ENCODE measurements at regions of chr19 and their contacts with region 1.

Region 1: GRCh38 chr19:48333467-48334384 is 8.4 kb downstream of the EMP3 start:
- DNase-seq: peak; percentile 89 to 97 (median 95)
- ATAC-seq: peak; percentile 56
- H3K4me3 ChIP-seq: peak overlapping the region; percentile 97
- H3K4me3 Mint-ChIP-seq: peak overlapping the region; percentile 89
- H3K27ac ChIP-seq: peak overlapping the region; percentile 97
- H3K27ac Mint-ChIP-seq: peak overlapping the region; percentile 99
- H3K4me1 ChIP-seq: peaks cover 58% of the 10 kb centered on the region
- H3K4me1 Mint-ChIP-seq: peaks cover 47% of the 10 kb centered on the region
- H3K27me3 ChIP-seq: no peaks in the 10 kb centered on the region
- H3K27me3 Mint-ChIP-seq: no peaks in the 10 kb centered on the region
- CTCF ChIP-seq: peak; percentile 84

Region 2: GRCh38 chr19:48203732-48204628 is 129.7 kb before region 1 on chr19:
- CTCF ChIA-PET with region 1: interaction called, 4 read pairs
- POLR2A ChIA-PET with region 1: interaction called, 10 read pairs
- intact Hi-C with region 1: no loop called
- DNase-seq: peak; percentile 84 to 95 (median 88)
- ATAC-seq: peak; percentile 100
- H3K4me3 ChIP-seq: peak overlapping the region; percentile 78
- H3K4me3 Mint-ChIP-seq: no peak overlapping the region
- H3K27ac ChIP-seq: peak overlapping the region; percentile 49 to 64
- H3K27ac Mint-ChIP-seq: no peak overlapping the region
- H3K4me1 ChIP-seq: peaks cover 33% of the 10 kb centered on the region
- H3K4me1 Mint-ChIP-seq: peaks cover 22% of the 10 kb centered on the region
- H3K27me3 ChIP-seq: no peaks in the 10 kb centered on the region
- H3K27me3 Mint-ChIP-seq: no peaks in the 10 kb centered on the region
- CTCF ChIP-seq: no peak

Region 3: DNA sequence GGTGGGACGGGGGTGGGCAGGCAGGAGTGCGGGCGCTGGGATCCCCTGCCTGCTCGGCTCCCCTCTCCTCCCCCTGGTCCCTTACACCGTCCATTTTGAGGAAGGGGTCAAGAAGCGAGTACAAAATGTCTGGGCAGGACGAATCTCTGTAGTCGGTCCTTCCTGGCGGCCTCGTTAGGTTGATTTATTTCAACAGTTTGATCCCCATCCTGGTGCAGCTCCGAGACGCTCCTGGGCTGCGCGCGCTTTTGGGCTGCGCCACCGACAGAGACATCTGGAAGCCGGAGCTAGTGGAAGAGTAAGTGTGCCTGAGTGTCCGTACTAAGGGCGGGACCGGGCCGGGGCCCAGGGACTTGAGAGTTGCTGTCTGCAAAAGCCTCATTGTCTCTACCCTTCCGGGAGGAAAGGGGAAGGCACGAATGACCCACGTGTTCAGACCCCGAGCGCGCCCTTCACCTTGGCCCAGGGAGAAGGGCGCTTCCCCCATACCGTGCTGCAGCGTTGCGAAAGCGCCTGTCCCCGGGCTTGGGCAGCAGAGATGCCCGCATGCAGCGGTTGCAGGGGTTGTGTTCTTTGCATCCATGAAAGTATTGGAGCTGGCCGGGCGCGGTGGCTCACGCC is 62.1 kb before region 1 on chr19:
- CTCF ChIA-PET with region 1: interaction called, 6 read pairs
- POLR2A ChIA-PET with region 1: interaction called, 4 read pairs
- intact Hi-C with region 1: loop called (anchors 1 kb)
- DNase-seq: peak in 3 of 14 experiments; percentile 19 to 26 (median 23)
- ATAC-seq: no peak
- H3K4me3 ChIP-seq: peak overlapping the region; percentile 55
- H3K4me3 Mint-ChIP-seq: peak overlapping the region; percentile 63
- H3K27ac ChIP-seq: no peak overlapping the region
- H3K27ac Mint-ChIP-seq: no peak overlapping the region
- H3K4me1 ChIP-seq: peaks cover 18% of the 10 kb centered on the region
- H3K4me1 Mint-ChIP-seq: peaks cover 20% of the 10 kb centered on the region
- H3K27me3 ChIP-seq: peaks cover 0 to 14% of the 10 kb centered on the region in 2 experiments
- H3K27me3 Mint-ChIP-seq: peaks cover 31% of the 10 kb centered on the region
- CTCF ChIP-seq: no peak

Region 4: GRCh38 chr19:48321622-48322591 is 11.8 kb before region 1 on chr19:
- CTCF ChIA-PET with region 1: interaction called, 159 read pairs
- POLR2A ChIA-PET with region 1: interaction called, 360 read pairs
- intact Hi-C with region 1: loop called (anchors 1 kb)
- DNase-seq: peak; percentile 98 to 100 (median 100)
- ATAC-seq: peak; percentile 61
- H3K4me3 ChIP-seq: peak overlapping the region; percentile 76
- H3K4me3 Mint-ChIP-seq: peak overlapping the region; percentile 93
- H3K27ac ChIP-seq: peak overlapping the region; percentile 99 to 100
- H3K27ac Mint-ChIP-seq: peak overlapping the region; percentile 99
- H3K4me1 ChIP-seq: peaks cover 62% of the 10 kb centered on the region
- H3K4me1 Mint-ChIP-seq: peaks cover 68% of the 10 kb centered on the region
- H3K27me3 ChIP-seq: no peaks in the 10 kb centered on the region
- H3K27me3 Mint-ChIP-seq: no peaks in the 10 kb centered on the region
- CTCF ChIP-seq: no peak

Region 5: GRCh38 chr19:48391107-48391986 is 57.6 kb after region 1 on chr19 and contains the start of gene KDELR1:
- CTCF ChIA-PET with region 1: interaction called, 8 read pairs
- POLR2A ChIA-PET with region 1: interaction called, 16 read pairs
- intact Hi-C with region 1: no loop called
- DNase-seq: peak; percentile 56 to 85 (median 69)
- ATAC-seq: peak; percentile 79
- H3K4me3 ChIP-seq: peak within 1 kb of the TSS; percentile 89
- H3K4me3 Mint-ChIP-seq: peak within 1 kb of the TSS; percentile 94
- H3K27ac ChIP-seq: peak within 1 kb of the TSS; percentile 71 to 79
- H3K27ac Mint-ChIP-seq: peak within 1 kb of the TSS; percentile 93
- H3K4me1 ChIP-seq: peaks cover 57% of the 10 kb centered on the region
- H3K4me1 Mint-ChIP-seq: peaks cover 34% of the 10 kb centered on the region
- H3K27me3 ChIP-seq: peaks cover 31% of the 10 kb centered on the region in 2 experiments
- H3K27me3 Mint-ChIP-seq: peaks cover 29% of the 10 kb centered on the region
- CTCF ChIP-seq: peak; percentile 93
- total RNA-seq, gene KDELR1: 32.2 to 39.6 TPM

Region 6: GRCh38 chr19:48618916-48619691 is 285.4 kb after region 1 on chr19 and contains the starts of genes RPL18 and SPHK2:
- CTCF ChIA-PET with region 1: no interaction called
- POLR2A ChIA-PET with region 1: interaction called, 8 read pairs
- intact Hi-C with region 1: loop called in 1 of 2 experiments (anchors 5 kb)
- DNase-seq: peak; percentile 89 to 99 (median 95)
- ATAC-seq: peak; percentile 67
- H3K4me3 ChIP-seq: peak within 1 kb of the TSS; percentile 94
- H3K4me3 Mint-ChIP-seq: peak within 1 kb of the TSS; percentile 98
- H3K27ac ChIP-seq: peak within 1 kb of the TSS; percentile 76 to 89
- H3K27ac Mint-ChIP-seq: peak within 1 kb of the TSS; percentile 97
- H3K4me1 ChIP-seq: peaks cover 64% of the 10 kb centered on the region
- H3K4me1 Mint-ChIP-seq: peaks cover 58% of the 10 kb centered on the region
- H3K27me3 ChIP-seq: no peaks in the 10 kb centered on the region
- H3K27me3 Mint-ChIP-seq: no peaks in the 10 kb centered on the region
- CTCF ChIP-seq: no peak
- total RNA-seq, gene RPL18: 2,820 to 2,913 TPM
- total RNA-seq, gene SPHK2: 14.1 to 15.3 TPM

Region 7: GRCh38 chr19:48646001-48646721 is 312.4 kb after region 1 on chr19 and contains the start of gene CA11:
- CTCF ChIA-PET with region 1: no interaction called
- POLR2A ChIA-PET with region 1: interaction called, 11 read pairs
- intact Hi-C with region 1: no loop called
- DNase-seq: peak; percentile 88 to 96 (median 92)
- ATAC-seq: peak; percentile 80
- H3K4me3 ChIP-seq: peak within 1 kb of the TSS; percentile 71
- H3K4me3 Mint-ChIP-seq: peak within 1 kb of the TSS; percentile 85
- H3K27ac ChIP-seq: peak within 1 kb of the TSS; percentile 78 to 96
- H3K27ac Mint-ChIP-seq: peak within 1 kb of the TSS; percentile 91
- H3K4me1 ChIP-seq: peaks cover 48% of the 10 kb centered on the region
- H3K4me1 Mint-ChIP-seq: peaks cover 54% of the 10 kb centered on the region
- H3K27me3 ChIP-seq: no peaks in the 10 kb centered on the region
- H3K27me3 Mint-ChIP-seq: no peaks in the 10 kb centered on the region
- CTCF ChIP-seq: peak; percentile 84
- total RNA-seq, gene CA11: 11.0 to 12.4 TPM